ENCODE measurements at regions of chr7 and their contacts with region 1.

Region 1: DNA sequence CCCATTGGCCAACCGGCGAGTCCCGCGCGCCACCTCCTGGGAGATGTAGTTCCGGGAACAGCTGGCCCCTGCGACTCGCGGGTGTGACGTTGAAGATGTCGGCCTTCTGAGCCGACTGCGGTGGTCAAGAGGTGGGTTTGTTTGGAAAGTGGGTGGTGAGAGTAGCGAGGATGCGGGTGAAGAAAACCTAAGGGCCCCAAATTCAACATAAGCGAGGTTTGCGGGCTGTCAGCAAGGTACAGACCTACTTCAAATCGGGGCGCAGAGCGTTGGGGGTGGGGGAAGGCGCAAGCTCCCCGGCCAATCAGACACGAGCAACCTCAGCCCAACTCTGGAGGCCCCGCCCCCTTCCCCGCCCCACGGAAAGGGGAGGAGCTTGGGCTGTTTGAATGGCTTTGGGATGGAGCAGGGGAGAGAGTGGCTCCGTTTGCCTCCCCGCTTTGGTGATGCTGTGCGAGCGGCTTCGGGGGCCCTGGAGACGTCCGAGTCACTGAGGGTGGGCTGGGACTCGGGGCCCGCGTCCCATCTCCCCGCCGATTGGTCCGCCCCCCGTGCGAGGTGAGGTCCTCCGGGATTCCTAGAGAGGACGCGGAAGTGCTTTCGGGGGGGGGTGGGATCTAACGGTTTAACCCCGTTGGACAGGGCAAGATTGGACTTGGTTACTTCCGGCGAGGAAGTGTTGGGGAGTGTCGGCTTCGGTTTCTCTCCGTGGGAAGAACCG is at the start of gene ZKSCAN5:
- DNase-seq: peak; percentile 93 to 99 (median 96)
- ATAC-seq: peak; percentile 84 to 85
- H3K4me3 Mint-ChIP-seq: peak within 1 kb of the TSS; percentile 83 to 100 (median 98)
- H3K27ac Mint-ChIP-seq: peak within 1 kb of the TSS; percentile 96 to 100 (median 98)
- H3K4me1 Mint-ChIP-seq: peaks cover 15 to 48% (median 31%) of the 10 kb centered on the region in 4 donors
- H3K27me3 Mint-ChIP-seq: no peaks in the 10 kb centered on the region
- polyA plus RNA-seq, gene ZKSCAN5: 3.0 to 5.7 (median 3.9) TPM

Region 2: DNA sequence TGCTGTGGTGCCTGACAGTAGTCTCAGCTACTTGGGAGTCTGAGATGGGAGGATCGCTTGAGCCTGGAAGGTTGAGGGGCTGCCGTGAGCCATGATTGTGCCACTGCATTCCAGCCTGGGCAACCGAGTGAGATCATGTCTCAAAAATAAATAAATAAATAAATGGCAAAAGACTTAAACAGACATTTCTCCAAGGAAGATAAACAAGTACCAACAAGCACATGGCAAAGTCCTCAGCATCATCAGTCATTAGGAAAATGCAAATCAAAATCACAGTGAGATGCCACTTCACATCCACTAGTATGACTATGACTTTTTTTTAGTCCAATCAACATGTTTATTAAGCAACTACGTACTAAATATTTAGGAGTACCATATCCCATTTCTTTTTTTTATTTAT is 275.5 kb before region 1 on chr7:
- POLR2A ChIA-PET with region 1: no interaction called
- DNase-seq: no peak
- ATAC-seq: no peak
- H3K4me3 Mint-ChIP-seq: no peak overlapping the region
- H3K27ac Mint-ChIP-seq: no peak overlapping the region
- H3K4me1 Mint-ChIP-seq: no peaks in the 10 kb centered on the region
- H3K27me3 Mint-ChIP-seq: no peaks in the 10 kb centered on the region

Region 3: DNA sequence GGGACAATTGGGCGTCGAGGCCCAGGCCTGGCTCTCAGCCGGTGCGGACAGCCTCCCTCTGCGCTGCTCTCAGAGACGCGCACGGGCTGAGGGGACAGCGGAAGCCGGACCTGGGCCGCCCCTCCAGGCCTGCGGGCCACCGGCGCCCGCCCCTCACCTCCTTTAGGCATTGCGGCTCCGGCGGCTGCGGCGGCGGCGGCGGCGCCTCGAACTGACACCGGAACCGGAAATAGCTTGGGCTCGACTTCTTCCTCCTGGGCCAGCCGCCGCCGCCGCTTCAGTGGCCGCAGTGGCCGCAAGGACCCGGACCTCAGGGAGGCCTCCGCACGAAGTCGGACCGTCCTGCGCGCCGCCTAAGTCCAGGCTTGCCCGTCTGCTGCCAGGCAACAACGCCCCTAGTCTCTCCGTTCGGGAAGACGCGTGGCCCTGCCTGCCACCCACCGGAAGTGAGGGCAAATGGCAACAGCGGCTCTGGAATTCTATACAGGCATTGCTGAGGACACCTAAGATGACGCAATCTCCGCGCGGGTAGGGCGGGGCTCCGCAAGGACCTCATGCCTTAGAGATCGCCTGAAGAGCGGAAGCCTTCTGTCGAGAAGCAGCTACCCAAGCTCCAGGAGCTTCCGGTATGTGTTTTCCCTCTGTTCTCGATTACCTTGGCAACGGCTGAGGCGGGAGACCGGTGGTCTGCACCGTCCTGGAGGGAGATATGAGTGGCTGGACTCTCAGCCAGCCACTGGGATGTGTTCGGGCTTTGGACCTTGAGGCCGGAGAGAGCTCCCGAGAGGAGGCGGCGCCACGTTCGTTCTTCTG is 96.2 kb before region 1 on chr7 and contains the starts of genes BUD31 and PDAP1:
- POLR2A ChIA-PET with region 1: interaction called, 17 read pairs
- DNase-seq: peak; percentile 79 to 100 (median 96)
- ATAC-seq: peak; percentile 82 to 84
- H3K4me3 Mint-ChIP-seq: peak within 1 kb of the TSS; percentile 91 to 100 (median 96)
- H3K27ac Mint-ChIP-seq: peak within 1 kb of the TSS; percentile 94 to 99 (median 98)
- H3K4me1 Mint-ChIP-seq: peaks cover 33 to 74% (median 55%) of the 10 kb centered on the region in 4 donors
- H3K27me3 Mint-ChIP-seq: no peaks in the 10 kb centered on the region
- polyA plus RNA-seq, gene BUD31: 151 to 216 (median 170) TPM
- polyA plus RNA-seq, gene PDAP1: 24.0 to 35.6 (median 33.4) TPM

Region 4: DNA sequence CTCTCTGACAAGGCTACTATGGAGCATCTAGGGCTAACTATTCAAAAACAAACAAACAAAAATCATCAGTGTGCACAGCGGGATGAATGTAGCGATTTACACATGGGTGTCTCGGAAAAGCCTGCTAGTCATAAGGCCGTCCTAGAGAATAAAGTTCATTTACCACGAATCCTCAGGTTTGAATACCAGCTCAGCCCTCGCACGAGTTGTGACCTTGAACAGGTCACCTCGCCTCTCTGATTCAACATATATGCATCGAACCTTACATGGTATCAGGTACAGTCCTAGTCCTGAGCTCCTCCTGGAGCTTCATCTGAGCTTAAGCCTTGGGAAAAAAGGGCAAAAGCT is 39.4 kb before region 1 on chr7:
- POLR2A ChIA-PET with region 1: interaction called, 22 read pairs
- DNase-seq: no peak
- ATAC-seq: peak; percentile 1 to 7
- H3K4me3 Mint-ChIP-seq: peak overlapping the region; percentile 88 to 98 (median 96)
- H3K27ac Mint-ChIP-seq: peak overlapping the region; percentile 83 to 98 (median 96)
- H3K4me1 Mint-ChIP-seq: peaks cover 17 to 50% (median 32%) of the 10 kb centered on the region in 4 donors
- H3K27me3 Mint-ChIP-seq: no peaks in the 10 kb centered on the region

Region 5: GRCh38 chr7:99472561-99473243 is 32.1 kb before region 1 on chr7 and contains the start of gene ZNF789:
- POLR2A ChIA-PET with region 1: interaction called, 47 read pairs
- DNase-seq: peak; percentile 89 to 99 (median 97)
- ATAC-seq: peak; percentile 96 to 97
- H3K4me3 Mint-ChIP-seq: peak within 1 kb of the TSS; percentile 91 to 100 (median 97)
- H3K27ac Mint-ChIP-seq: peak within 1 kb of the TSS; percentile 93 to 98 (median 98)
- H3K4me1 Mint-ChIP-seq: peaks cover 18 to 42% (median 32%) of the 10 kb centered on the region in 4 donors
- H3K27me3 Mint-ChIP-seq: no peaks in the 10 kb centered on the region
- polyA plus RNA-seq, gene ZNF789: 7.3 to 8.2 (median 8.0) TPM

Region 6: GRCh38 chr7:99551767-99552463 is 47.2 kb after region 1 on chr7 and contains the start of gene FAM200A:
- POLR2A ChIA-PET with region 1: interaction called, 71 read pairs
- DNase-seq: peak; percentile 75 to 93 (median 84)
- ATAC-seq: peak; percentile 98 to 99
- H3K4me3 Mint-ChIP-seq: peak within 1 kb of the TSS; percentile 87 to 95 (median 92)
- H3K27ac Mint-ChIP-seq: peak within 1 kb of the TSS; percentile 85 to 99 (median 97)
- H3K4me1 Mint-ChIP-seq: peaks cover 18 to 56% (median 44%) of the 10 kb centered on the region in 4 donors
- H3K27me3 Mint-ChIP-seq: no peaks in the 10 kb centered on the region
- polyA plus RNA-seq, gene FAM200A: 3.2 to 6.3 (median 5.4) TPM

Region 7: DNA sequence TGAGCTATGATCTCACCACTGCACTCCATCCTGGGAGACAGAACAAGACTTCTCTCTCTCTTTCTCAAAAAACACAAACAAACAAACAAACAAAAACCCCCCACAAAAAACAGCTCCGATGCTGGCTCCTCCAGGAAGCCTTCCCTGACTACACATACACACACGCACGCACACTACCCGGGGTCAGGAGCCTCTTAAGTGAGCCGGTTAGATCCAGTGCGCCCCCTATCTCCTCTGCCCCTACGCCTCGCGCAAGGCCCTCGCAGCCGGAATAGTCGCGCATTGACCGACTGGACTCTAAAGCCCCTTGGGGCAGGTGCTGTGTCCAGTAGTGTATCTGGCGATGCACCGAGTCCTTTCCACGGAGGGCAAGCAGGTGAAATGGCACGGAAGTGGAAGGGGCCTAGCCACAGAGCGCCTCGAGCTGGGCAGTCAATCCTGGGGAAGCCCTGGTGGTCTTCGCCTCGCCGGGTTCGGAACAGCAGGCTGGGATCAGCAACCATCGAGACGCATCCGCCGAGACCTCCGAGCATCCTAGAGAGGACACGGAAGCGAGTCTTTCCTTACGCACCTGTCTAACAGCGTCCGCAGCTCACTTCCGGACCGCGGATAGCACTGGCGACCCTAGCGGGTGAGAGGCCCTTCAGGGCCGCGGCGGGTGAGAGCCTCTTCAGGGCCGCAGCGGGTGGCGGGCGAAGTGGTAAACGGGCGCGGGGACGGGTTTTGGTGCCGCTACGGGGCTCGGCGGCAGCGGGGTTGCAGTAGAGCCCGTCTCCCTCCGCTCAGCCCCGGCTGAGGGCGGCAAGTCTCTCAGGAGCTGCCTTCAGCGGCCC is 111.8 kb after region 1 on chr7 and contains the start of gene ZSCAN25:
- POLR2A ChIA-PET with region 1: interaction called, 19 read pairs
- DNase-seq: peak; percentile 70 to 93 (median 83)
- ATAC-seq: peak; percentile 96
- H3K4me3 Mint-ChIP-seq: peak within 1 kb of the TSS; percentile 95 to 99 (median 96)
- H3K27ac Mint-ChIP-seq: peak within 1 kb of the TSS; percentile 92 to 99 (median 98)
- H3K4me1 Mint-ChIP-seq: peaks cover 18 to 52% (median 47%) of the 10 kb centered on the region in 4 donors
- H3K27me3 Mint-ChIP-seq: no peaks in the 10 kb centered on the region
- polyA plus RNA-seq, gene ZSCAN25: 9.2 to 19.0 (median 16.2) TPM

Region 8: GRCh38 chr7:99624484-99624883 is 119.7 kb after region 1 on chr7:
- POLR2A ChIA-PET with region 1: interaction called, 10 read pairs
- DNase-seq: peak; percentile 53 to 94 (median 86)
- ATAC-seq: peak; percentile 93 to 95
- H3K4me3 Mint-ChIP-seq: peak overlapping the region; percentile 84 to 98 (median 90)
- H3K27ac Mint-ChIP-seq: peak overlapping the region; percentile 93 to 100 (median 99)
- H3K4me1 Mint-ChIP-seq: peaks cover 31 to 60% (median 57%) of the 10 kb centered on the region in 4 donors
- H3K27me3 Mint-ChIP-seq: no peaks in the 10 kb centered on the region

Measured in naive thymus-derived CD8-positive, alpha-beta T cell (primary cell).